ENCODE measurements at regions of chr15 and their contacts with region 1.

Region 1: GRCh38 chr15:78469031-78469430 is 31.0 kb downstream of the IREB2 start:
- DNase-seq: no peak
- H3K4me3 ChIP-seq: no peak overlapping the region
- H3K27ac ChIP-seq: no peak overlapping the region
- H3K4me1 ChIP-seq: no peaks in the 10 kb centered on the region
- H3K27me3 ChIP-seq: no peaks in the 10 kb centered on the region
- CTCF ChIP-seq: no peak

Region 2: GRCh38 chr15:77224352-77224751 is 1244.7 kb before region 1 on chr15:
- CTCF ChIA-PET with region 1: no interaction called
- POLR2A ChIA-PET with region 1: no interaction called
- intact Hi-C with region 1: no loop called
- DNase-seq: peak; percentile 96
- H3K4me3 ChIP-seq: peak overlapping the region; percentile 8
- H3K27ac ChIP-seq: peak overlapping the region; percentile 54
- H3K4me1 ChIP-seq: peaks cover 54% of the 10 kb centered on the region
- H3K27me3 ChIP-seq: no peaks in the 10 kb centered on the region
- CTCF ChIP-seq: no peak

Region 3: DNA sequence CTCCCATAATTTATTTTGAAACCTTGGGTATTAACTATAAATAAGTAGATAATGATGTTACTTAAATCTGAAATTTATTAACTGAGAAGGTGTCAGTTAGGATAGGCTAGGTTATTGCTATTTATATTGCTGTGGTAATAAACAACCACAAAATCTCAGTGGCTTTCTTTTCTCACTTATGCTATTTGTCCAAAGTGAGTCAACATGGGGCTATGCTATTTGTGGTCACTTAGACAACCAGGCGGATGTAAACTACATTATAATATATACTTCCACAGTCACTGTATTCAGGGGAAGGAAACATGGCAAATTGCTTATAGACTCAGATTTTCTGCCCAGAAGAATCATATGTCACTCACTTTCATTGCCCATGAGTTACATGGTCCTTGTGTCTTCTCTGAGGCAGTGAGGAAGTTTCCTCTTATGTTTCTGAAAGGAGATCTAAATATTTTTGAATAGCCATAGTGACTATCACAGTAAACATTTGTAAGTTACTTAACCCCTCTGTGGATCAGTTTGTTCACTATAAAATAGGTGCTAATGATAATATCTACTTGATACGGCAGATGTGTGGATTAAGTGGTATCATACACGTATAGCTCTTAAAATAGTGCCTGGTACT is 1028.5 kb before region 1 on chr15:
- CTCF ChIA-PET with region 1: no interaction called
- POLR2A ChIA-PET with region 1: no interaction called
- intact Hi-C with region 1: no loop called
- DNase-seq: no peak
- H3K4me3 ChIP-seq: no peak overlapping the region
- H3K27ac ChIP-seq: no peak overlapping the region
- H3K4me1 ChIP-seq: no peaks in the 10 kb centered on the region
- H3K27me3 ChIP-seq: no peaks in the 10 kb centered on the region
- CTCF ChIP-seq: no peak

Region 4: GRCh38 chr15:77702211-77702957 is 766.6 kb before region 1 on chr15:
- CTCF ChIA-PET with region 1: no interaction called
- POLR2A ChIA-PET with region 1: no interaction called
- intact Hi-C with region 1: no loop called
- DNase-seq: no peak
- H3K4me3 ChIP-seq: no peak overlapping the region
- H3K27ac ChIP-seq: peak overlapping the region; percentile 1
- H3K4me1 ChIP-seq: no peaks in the 10 kb centered on the region
- H3K27me3 ChIP-seq: no peaks in the 10 kb centered on the region
- CTCF ChIP-seq: no peak

Region 5: GRCh38 chr15:78502641-78503040 is 33.6 kb after region 1 on chr15:
- CTCF ChIA-PET with region 1: no interaction called
- POLR2A ChIA-PET with region 1: interaction called, 16 read pairs
- intact Hi-C with region 1: no loop called
- DNase-seq: no peak
- H3K4me3 ChIP-seq: no peak overlapping the region
- H3K27ac ChIP-seq: no peak overlapping the region
- H3K4me1 ChIP-seq: no peaks in the 10 kb centered on the region
- H3K27me3 ChIP-seq: no peaks in the 10 kb centered on the region
- CTCF ChIP-seq: no peak